ENCODE measurements at regions of chr15 and their contacts with region 1.

Region 1: GRCh38 chr15:51971375-51972133 is at the start of gene LEO1:
- DNase-seq: peak; percentile 95
- H3K4me3 Mint-ChIP-seq: peak within 1 kb of the TSS; percentile 97
- H3K27ac Mint-ChIP-seq: peak within 1 kb of the TSS; percentile 94
- H3K4me1 Mint-ChIP-seq: peaks cover 12% of the 10 kb centered on the region
- H3K27me3 Mint-ChIP-seq: no peaks in the 10 kb centered on the region
- CTCF ChIP-seq: peak; percentile 31
- total RNA-seq, gene LEO1: 24.2 and 29.3 TPM in 2 replicates

Region 2: GRCh38 chr15:51917493-51917892 is 54.1 kb before region 1 on chr15:
- CTCF ChIA-PET with region 1: no interaction called
- POLR2A ChIA-PET with region 1: no interaction called
- intact Hi-C with region 1: no loop called
- DNase-seq: peak; percentile 63
- H3K4me3 Mint-ChIP-seq: no peak overlapping the region
- H3K27ac Mint-ChIP-seq: no peak overlapping the region
- H3K4me1 Mint-ChIP-seq: no peaks in the 10 kb centered on the region
- H3K27me3 Mint-ChIP-seq: no peaks in the 10 kb centered on the region
- CTCF ChIP-seq: peak; percentile 35

Region 3: DNA sequence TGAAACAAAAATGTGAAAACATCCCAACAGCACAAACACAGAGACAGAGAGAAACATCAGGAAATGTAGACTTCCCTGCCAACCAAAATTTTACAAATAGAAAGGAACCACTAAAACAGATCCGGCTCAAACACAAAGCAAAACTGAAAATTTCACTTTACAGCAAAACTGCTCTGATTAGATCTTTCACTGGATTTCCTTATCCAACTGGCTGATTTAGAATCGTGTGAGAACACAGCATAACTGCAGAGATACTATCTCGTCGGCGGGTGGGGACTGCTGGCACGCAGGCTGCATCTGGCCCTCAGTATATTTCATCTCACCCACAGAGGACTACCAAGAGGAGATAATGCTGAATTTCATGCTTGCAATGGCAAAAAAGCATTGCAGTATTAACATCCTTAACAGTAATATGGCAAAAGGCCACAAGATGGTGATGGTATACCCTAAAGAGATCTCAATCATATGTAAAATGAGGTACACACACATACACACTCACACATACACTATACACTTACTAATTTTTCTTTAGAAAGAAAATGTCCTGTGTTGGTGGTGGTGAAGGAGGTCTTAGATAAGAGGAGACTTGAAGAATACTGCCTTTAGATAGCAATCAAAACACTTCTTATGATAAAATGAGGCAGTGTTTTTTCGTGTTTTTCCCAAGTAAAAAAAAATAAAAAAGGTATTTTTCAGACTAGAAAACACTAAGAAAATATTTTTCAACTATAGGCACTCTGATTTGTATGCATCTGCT is 10.6 kb after region 1 on chr15:
- CTCF ChIA-PET with region 1: interaction called, 10 read pairs
- POLR2A ChIA-PET with region 1: interaction called, 33 read pairs
- intact Hi-C with region 1: no loop called
- DNase-seq: peak; percentile 78
- H3K4me3 Mint-ChIP-seq: peak overlapping the region; percentile 31
- H3K27ac Mint-ChIP-seq: peak overlapping the region; percentile 77
- H3K4me1 Mint-ChIP-seq: peaks cover 12% of the 10 kb centered on the region
- H3K27me3 Mint-ChIP-seq: no peaks in the 10 kb centered on the region
- CTCF ChIP-seq: peak; percentile 82

Region 4: DNA sequence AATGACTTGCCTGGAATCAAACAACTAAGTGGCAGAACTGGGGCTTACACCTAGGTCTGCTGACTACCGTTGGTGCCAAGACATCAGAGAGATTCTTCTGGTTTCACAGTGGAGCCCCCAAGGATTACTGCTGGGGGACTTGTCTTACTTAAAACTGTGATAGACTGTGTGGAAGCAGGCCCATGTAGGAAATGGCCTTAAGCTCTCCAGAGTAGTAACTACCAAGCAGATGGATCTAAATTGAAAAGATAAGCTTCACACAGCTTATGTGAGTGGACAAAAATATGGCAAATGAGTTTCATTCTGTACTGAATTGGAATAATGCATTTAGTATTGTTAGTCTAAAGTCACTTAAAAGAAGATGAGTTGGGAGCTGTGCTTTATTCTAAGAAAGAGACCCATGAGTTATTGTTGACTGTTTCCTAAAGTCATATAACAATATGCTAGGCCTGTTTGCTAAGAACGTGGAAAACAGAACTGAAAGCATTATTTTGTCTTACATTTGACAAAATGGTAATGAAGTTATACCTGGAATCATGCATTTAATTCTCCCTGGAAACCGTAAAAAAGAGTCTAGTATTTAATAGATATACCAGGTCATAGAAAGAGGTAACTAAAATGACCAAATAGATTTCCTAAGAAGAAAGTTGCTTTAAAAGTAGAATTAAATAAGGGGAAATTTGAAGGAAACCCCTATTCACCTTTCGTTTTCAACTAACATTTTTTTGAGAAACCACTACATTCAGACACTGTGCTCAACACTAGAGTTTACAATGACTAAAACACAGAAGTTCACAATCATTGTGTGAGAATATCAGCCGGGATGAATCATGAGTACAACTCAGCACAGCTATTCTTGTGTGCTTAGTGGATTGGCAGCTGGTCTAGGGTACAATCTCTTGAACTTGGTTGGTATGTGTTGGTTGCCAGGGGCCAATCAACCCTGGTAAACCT is 34.5 kb after region 1 on chr15:
- CTCF ChIA-PET with region 1: no interaction called
- POLR2A ChIA-PET with region 1: interaction called, 17 read pairs
- intact Hi-C with region 1: no loop called
- DNase-seq: peak; percentile 48
- H3K4me3 Mint-ChIP-seq: no peak overlapping the region
- H3K27ac Mint-ChIP-seq: peak overlapping the region; percentile 19
- H3K4me1 Mint-ChIP-seq: peaks cover 19% of the 10 kb centered on the region
- H3K27me3 Mint-ChIP-seq: no peaks in the 10 kb centered on the region
- CTCF ChIP-seq: no peak

Region 5: DNA sequence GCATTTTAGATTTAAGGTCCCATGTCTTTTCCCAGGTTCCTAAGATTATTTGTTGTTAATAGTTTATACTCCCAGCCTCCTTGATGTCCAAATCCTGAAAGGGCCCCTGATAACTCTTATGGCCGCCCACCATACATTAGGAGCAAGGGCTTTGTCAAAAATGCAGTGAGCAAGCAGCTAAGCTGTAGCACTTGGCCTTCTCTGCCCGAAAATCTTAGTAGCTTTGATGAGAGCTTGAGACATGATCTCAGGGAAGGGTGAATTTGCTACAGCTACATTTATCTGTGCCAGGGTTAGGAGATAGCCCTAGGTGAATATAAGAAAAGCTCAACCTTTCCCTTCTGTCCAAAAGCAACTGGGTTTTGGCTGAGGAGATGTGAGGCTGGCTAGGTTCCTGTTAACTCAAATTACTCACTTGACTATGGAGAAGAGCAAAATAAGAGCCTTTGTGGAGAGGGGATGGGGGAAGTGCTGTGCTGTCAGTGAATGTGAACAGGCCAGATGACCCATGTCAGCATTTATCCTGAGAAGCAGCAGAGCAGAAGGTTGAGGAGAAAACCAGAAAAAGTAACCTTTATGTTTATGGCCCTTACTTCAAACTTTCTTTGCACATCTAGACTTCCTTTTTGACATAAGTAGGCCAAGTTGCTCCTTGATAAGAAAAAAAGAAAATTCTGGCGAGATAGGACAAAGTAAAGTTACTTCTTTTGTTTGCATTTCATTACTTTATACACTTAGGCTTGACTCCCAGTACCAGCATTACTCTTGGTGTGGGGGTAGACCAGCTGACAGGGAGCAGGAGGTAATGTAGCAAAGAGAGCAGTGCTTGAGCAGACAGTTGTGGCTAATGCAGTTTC is 68.6 kb after region 1 on chr15:
- CTCF ChIA-PET with region 1: interaction called, 3 read pairs
- POLR2A ChIA-PET with region 1: interaction called, 11 read pairs
- intact Hi-C with region 1: no loop called
- DNase-seq: no peak
- H3K4me3 Mint-ChIP-seq: no peak overlapping the region
- H3K27ac Mint-ChIP-seq: peak overlapping the region; percentile 77
- H3K4me1 Mint-ChIP-seq: peaks cover 41% of the 10 kb centered on the region
- H3K27me3 Mint-ChIP-seq: no peaks in the 10 kb centered on the region
- CTCF ChIP-seq: no peak

Region 6: DNA sequence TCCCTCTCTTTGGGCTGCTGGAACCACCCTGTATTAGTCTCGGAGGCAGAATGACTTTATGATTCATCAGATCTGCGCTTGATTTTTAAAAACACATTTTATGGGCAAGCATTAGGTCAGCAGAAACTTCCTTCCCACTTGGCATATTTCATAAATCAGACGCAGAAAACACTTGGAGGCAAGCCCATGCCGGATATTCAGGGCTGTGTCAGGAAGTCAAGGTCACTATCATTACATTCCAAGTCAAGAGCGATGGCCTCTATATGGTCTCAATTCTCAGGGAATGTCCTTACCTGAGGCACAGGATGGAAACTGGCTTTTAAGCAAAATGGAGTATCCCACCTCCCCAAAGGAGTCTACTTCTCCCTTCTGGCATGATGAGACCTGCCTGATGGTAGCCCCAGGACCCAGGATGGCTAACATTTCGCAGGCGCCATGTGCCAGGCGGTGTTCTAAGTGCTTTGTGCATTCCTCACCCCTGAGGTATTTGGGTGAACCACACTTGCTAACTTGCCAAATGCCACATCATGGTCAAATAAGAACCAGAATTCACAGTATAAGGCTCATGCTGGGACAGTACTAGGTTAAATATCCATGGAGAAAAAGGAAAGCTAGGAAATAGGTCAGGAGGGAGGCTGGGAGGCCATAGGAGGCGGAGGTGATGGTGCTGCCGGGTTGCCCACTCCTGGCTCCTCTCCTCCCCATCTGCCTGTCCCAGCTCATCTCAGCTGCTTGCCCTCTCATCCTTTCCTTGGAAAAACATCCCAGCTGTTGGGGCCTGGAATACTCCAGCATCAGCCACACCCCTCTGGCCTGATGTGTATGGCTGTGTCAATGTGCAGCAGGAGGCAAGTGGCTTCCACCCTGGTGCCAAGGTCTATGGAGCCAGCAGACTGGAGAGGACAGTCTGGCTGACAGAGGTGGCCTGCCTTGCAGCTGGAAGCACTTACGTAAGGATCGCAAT is 122.3 kb after region 1 on chr15:
- CTCF ChIA-PET with region 1: no interaction called
- POLR2A ChIA-PET with region 1: interaction called, 16 read pairs
- intact Hi-C with region 1: no loop called
- DNase-seq: peak; percentile 96
- H3K4me3 Mint-ChIP-seq: peak overlapping the region; percentile 48
- H3K27ac Mint-ChIP-seq: peak overlapping the region; percentile 99
- H3K4me1 Mint-ChIP-seq: peaks cover 34% of the 10 kb centered on the region
- H3K27me3 Mint-ChIP-seq: no peaks in the 10 kb centered on the region
- CTCF ChIP-seq: no peak